ENCODE measurements at regions of chr10 and their contacts with region 1.

Region 1: DNA sequence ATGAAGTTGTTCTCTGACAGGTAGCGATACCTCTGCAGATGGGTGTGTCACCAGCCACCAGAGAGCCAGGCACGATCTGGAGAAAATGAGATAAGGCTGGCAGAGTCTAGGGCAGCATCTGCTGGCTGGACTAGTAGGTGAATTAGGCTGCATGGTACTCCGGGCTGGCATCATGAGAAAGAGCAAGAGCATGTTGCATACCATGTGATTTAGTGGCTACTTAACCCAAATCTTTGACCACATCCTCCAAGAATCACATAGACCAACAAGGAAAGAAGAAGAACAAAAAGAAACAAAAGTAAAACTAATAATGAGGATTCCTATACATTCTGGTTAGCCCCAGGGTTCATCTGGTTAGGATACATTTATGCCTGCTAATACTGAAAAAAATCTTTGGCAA is 23.4 kb upstream of the FAM170B start:
- DNase-seq: no peak
- ATAC-seq: no peak
- H3K4me3 ChIP-seq: no peak overlapping the region
- H3K27ac ChIP-seq: no peak overlapping the region
- H3K4me1 ChIP-seq: peaks cover 0 to 7% (median 0%) of the 10 kb centered on the region in 12 donors
- H3K27me3 ChIP-seq: no peaks in the 10 kb centered on the region
- CTCF ChIP-seq: no peak
- POLR2A ChIP-seq: no peak

Region 2: DNA sequence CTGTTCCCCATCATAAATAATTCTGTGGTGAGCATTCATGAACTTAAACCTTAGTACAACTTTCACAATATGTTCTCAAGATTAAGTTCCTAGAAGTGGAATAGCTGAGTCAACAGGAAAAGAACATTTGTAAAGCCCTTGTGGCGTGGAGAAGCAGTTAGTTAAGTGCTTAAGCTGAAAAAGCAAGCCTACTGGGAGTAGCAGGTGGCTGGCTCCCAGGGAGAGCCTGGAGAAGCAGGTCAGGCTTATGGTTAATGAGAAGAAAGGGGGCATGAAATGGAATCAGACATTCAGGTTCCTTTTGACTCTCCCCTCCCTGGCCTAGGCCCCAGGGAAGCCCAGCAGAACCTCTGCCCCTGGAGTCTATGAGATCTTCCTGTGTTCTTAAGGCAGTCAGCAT is 77.2 kb before region 1 on chr10:
- intact Hi-C with region 1: loop called in 1 of 10 experiments (anchors 2 kb)
- DNase-seq: peak in 1 of 5 donors; percentile 39
- ATAC-seq: peak; percentile 33 to 57 (median 41)
- H3K4me3 ChIP-seq: no peak overlapping the region
- H3K27ac ChIP-seq: peak overlapping the region in 6 of 12 donors; percentile 1 to 48 (median 25)
- H3K4me1 ChIP-seq: peaks cover 0 to 76% (median 58%) of the 10 kb centered on the region in 12 donors
- H3K27me3 ChIP-seq: no peaks in the 10 kb centered on the region
- CTCF ChIP-seq: no peak
- POLR2A ChIP-seq: no peak

Region 3: DNA sequence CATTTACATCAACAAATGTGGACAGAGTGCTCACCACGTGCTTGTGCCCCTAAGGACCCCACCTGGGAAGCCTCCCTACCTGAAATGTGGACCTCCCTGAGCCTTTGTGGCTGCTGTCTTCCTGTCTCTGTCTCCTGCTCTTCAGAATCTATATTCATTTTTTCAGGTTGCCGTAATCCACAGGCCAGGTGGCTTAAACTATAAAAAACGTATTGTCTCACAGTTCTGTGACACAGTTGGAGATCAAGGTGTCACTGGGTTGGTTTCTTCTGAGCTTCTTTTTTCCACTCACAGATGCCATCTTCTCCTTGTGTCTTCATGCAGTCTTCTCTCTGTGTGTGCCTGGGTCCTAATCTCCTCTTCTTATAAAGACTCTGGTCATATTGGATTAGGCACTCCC is 36.3 kb before region 1 on chr10:
- intact Hi-C with region 1: no loop called
- DNase-seq: no peak
- ATAC-seq: no peak
- H3K4me3 ChIP-seq: no peak overlapping the region
- H3K27ac ChIP-seq: no peak overlapping the region
- H3K4me1 ChIP-seq: peaks cover 0 to 13% (median under 1%) of the 10 kb centered on the region in 12 donors
- H3K27me3 ChIP-seq: peaks cover 0 to 3% (median 0%) of the 10 kb centered on the region in 9 donors
- CTCF ChIP-seq: no peak
- POLR2A ChIP-seq: no peak

Region 4: DNA sequence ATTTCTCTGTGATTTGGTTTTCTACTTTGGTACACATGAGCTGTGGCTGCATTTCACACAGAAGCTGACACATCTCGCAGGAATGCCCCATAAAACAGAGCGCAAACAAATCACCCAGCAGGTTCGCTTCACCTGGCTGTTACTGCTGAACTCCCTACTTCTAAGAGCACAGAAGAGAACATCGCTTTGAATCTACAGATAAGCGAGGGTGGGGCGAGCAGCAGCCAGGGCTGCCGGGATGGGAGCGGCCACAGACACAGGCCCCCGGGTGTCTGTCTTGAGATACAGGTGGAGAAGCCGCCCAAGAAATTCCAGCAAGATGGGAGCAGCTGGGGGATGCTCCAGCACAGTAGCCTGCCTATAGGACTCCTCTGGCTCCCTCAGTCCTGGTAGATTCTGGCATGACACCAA is 577.4 kb after region 1 on chr10:
- intact Hi-C with region 1: no loop called
- DNase-seq: no peak
- ATAC-seq: no peak
- H3K4me3 ChIP-seq: no peak overlapping the region
- H3K27ac ChIP-seq: no peak overlapping the region
- H3K4me1 ChIP-seq: no peaks in the 10 kb centered on the region
- H3K27me3 ChIP-seq: no peaks in the 10 kb centered on the region
- CTCF ChIP-seq: no peak
- POLR2A ChIP-seq: no peak

Measured in heart left ventricle (tissue), 16 donors.